Naive thymus-derived CD4-positive, alpha-beta T cell (primary cell): ENCODE measurements at regions of chr5 and their contacts with region 1.

Region 1: DNA sequence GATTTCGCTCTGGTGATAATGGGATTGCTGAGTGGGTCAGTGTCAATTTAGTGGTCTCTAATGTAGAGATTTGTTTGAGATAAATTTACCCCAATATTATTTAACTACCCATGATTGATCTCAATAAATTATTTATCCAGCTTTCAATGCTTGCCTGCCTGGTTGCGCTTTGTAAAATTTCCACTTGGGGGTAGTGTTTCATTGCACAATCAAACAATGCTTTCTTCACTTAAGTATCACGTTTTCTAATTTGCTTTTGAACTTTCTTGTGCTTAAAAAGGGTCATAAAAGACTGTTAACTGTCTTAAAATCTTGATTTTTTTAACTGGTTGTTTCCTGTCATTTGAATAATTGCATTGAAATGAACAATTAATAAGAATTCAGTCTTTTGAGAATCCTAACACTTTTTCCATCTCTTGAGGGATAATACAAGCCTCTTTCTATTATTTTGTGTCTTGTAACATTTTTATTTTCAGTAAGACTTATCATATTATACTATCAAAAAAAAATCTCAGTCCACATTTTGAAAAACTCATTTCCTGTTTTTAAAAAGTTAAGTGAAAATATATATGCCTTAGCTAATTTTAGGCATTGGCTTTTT is 18.7 kb downstream of the HSD17B4 start:
- DNase-seq: peak in 5 of 9 donors; percentile 16 to 29 (median 20)
- ATAC-seq: no peak
- H3K4me3 ChIP-seq: no peak overlapping the region
- H3K4me3 Mint-ChIP-seq: no peak overlapping the region
- H3K27ac ChIP-seq: no peak overlapping the region
- H3K27ac Mint-ChIP-seq: no peak overlapping the region
- H3K4me1 ChIP-seq: no peaks in the 10 kb centered on the region
- H3K4me1 Mint-ChIP-seq: peaks cover 3 to 26% (median 22%) of the 10 kb centered on the region in 7 donors
- H3K27me3 ChIP-seq: no peaks in the 10 kb centered on the region
- H3K27me3 Mint-ChIP-seq: no peaks in the 10 kb centered on the region

Region 2: GRCh38 chr5:119243898-119244297 is 227.1 kb before region 1 on chr5:
- CTCF ChIA-PET with region 1: no interaction called
- POLR2A ChIA-PET with region 1: no interaction called
- intact Hi-C with region 1: no loop called
- DNase-seq: no peak
- ATAC-seq: no peak
- H3K4me3 ChIP-seq: no peak overlapping the region
- H3K4me3 Mint-ChIP-seq: no peak overlapping the region
- H3K27ac ChIP-seq: no peak overlapping the region
- H3K27ac Mint-ChIP-seq: peak overlapping the region in 2 of 9 donors; percentile 55 to 66
- H3K4me1 ChIP-seq: peaks cover 0 to 6% of the 10 kb centered on the region in 2 donors
- H3K4me1 Mint-ChIP-seq: peaks cover 4 to 7% (median 6%) of the 10 kb centered on the region in 7 donors
- H3K27me3 ChIP-seq: no peaks in the 10 kb centered on the region
- H3K27me3 Mint-ChIP-seq: no peaks in the 10 kb centered on the region

Region 3: GRCh38 chr5:119743927-119744326 is 273.0 kb after region 1 on chr5:
- CTCF ChIA-PET with region 1: no interaction called
- POLR2A ChIA-PET with region 1: no interaction called
- intact Hi-C with region 1: loop called (anchors 1 to 5 kb)
- DNase-seq: peak in 3 of 9 donors; percentile 2 to 25 (median 12)
- ATAC-seq: no peak
- H3K4me3 ChIP-seq: no peak overlapping the region
- H3K4me3 Mint-ChIP-seq: no peak overlapping the region
- H3K27ac ChIP-seq: no peak overlapping the region
- H3K27ac Mint-ChIP-seq: no peak overlapping the region
- H3K4me1 ChIP-seq: no peaks in the 10 kb centered on the region
- H3K4me1 Mint-ChIP-seq: no peaks in the 10 kb centered on the region
- H3K27me3 ChIP-seq: no peaks in the 10 kb centered on the region
- H3K27me3 Mint-ChIP-seq: peaks cover 0 to 12% (median 5%) of the 10 kb centered on the region in 5 donors